Motor neuron (in vitro differentiated cells): ENCODE measurements at regions of chr4 and their contacts with region 1.

Region 1: DNA sequence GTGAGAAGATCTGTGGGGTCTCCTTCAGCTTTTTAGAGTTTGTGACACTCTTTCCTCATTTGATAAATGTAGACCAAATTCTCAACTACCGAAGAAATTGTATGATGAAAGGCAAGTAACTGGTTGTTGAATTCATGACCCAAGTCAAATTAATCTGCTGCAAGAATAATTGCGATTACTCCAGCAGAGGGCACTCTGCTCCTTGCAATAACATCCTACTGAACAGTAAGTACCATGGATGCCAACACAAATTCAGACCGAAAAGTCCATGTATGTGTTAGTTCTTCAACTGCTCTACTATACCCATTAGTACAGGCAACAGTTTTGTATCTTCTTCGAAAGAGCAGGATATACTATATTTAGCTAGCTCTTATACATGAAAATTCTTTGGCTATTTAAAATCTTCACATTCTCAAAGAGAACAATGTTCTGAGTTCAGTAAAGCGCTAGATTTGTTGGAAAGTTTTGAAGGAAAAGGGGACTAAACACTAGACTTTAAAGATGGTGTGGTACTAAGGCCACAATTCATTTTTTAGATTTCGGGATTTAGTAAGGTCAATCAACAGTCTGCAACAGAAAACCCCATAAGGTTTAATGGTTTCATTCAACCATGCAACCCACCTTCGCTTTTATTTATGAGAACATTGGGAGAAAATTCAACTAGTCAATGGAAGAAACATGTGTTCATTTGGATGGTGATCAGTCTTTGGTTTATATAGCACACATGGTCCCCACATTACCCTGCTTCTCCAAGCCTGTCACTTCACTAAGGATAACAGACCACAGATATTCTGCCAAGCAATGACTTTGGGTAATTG is 105.4 kb upstream of the TBC1D9 start:
- ATAC-seq: peak; percentile 32 to 80 (median 60)
- H3K4me3 ChIP-seq: no peak overlapping the region
- H3K27ac ChIP-seq: no peak overlapping the region
- H3K4me1 ChIP-seq: peaks cover 5 to 20% of the 10 kb centered on the region in 2 donors

Region 2: GRCh38 chr4:141133146-141133998 is 271.8 kb after region 1 on chr4 and contains the start of gene RNF150:
- in situ Hi-C with region 1: loop called in 8 of 9 experiments (anchors 10 to 25 kb)
- ATAC-seq: peak; percentile 72 to 96 (median 94)
- H3K4me3 ChIP-seq: peak within 1 kb of the TSS; percentile 73 to 87 (median 81)
- H3K27ac ChIP-seq: peak within 1 kb of the TSS; percentile 81 to 88
- H3K4me1 ChIP-seq: peaks cover 3 to 19% of the 10 kb centered on the region in 2 donors
- total RNA-seq, gene RNF150: 0.71 to 45.2 (median 20.0) TPM